ENCODE measurements at regions of chr13 and their contacts with region 1.

Region 1: GRCh38 chr13:41955605-41956004 is 5.3 kb downstream of the VWA8 start:
- DNase-seq: no peak
- ATAC-seq: no peak
- H3K4me3 ChIP-seq: no peak overlapping the region
- H3K27ac ChIP-seq: no peak overlapping the region
- H3K4me1 ChIP-seq: peaks cover 11% of the 10 kb centered on the region; the same call in 1 of the 2 replicates
- H3K27me3 ChIP-seq: no peaks in the 10 kb centered on the region
- CTCF ChIP-seq: no peak

Region 2: DNA sequence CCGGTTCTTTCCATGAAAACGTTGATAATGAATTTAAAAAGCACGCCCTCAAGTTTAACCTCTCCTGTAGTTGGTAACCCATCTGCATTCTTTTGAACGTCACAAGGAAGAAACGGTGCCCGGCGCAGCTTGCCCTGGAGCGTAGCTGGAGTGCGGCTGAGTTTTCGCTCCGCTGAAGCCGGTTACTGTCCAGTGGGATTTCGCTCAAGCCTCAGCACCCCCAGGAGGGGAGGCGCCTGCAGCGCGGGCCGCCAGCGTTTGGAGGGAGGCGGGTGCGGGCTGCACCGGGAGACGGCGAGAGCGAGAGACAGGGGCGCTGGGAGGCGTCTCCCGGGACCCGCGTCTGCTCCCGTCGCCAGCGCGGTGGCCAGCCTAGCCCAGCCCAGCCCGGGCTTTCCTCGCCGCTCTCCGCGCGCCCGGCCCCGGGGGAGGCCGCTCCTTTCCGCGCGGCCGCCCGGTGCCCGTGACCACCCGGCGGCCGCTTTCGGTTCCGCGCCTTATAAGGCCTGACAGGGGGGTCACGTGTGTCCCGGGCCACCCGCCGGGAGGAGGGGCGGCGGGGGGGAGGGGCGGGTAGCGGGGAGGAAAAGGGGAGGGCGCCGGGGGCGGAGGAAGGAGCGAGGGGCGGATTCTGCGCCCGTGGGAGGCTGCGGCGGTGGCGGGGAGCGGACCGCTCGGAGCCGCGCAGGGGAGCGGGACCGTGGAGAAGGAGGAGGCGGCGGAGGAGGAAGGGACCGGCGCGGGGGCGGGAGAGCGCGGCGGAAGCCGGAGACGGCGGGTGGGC is 84.5 kb after region 1 on chr13:
- CTCF ChIA-PET with region 1: no interaction called
- POLR2A ChIA-PET with region 1: no interaction called
- in situ Hi-C with region 1: no loop called
- intact Hi-C with region 1: loop called (anchors 10 kb)
- DNase-seq: no peak
- ATAC-seq: peak; percentile 85
- H3K4me3 ChIP-seq: peak overlapping the region; percentile 76 to 82
- H3K27ac ChIP-seq: peak overlapping the region; percentile 89
- H3K4me1 ChIP-seq: no peaks in the 10 kb centered on the region
- H3K27me3 ChIP-seq: no peaks in the 10 kb centered on the region
- CTCF ChIP-seq: no peak; the same call in 1 of the 2 replicates

Measured in Panc1 (cell line).